Common myeloid progenitor, CD34-positive (primary cell): ENCODE measurements at regions of chr3 and their contacts with region 1.

Region 1: GRCh38 chr3:184822654-184823053 is 10.7 kb downstream of the VPS8 start:
- DNase-seq: no peak
- H3K4me3 ChIP-seq: no peak overlapping the region
- H3K27ac ChIP-seq: no peak overlapping the region
- H3K4me1 ChIP-seq: peaks cover 0 to 20% (median 1%) of the 10 kb centered on the region in 4 experiments
- H3K27me3 ChIP-seq: no peaks in the 10 kb centered on the region

Region 2: DNA sequence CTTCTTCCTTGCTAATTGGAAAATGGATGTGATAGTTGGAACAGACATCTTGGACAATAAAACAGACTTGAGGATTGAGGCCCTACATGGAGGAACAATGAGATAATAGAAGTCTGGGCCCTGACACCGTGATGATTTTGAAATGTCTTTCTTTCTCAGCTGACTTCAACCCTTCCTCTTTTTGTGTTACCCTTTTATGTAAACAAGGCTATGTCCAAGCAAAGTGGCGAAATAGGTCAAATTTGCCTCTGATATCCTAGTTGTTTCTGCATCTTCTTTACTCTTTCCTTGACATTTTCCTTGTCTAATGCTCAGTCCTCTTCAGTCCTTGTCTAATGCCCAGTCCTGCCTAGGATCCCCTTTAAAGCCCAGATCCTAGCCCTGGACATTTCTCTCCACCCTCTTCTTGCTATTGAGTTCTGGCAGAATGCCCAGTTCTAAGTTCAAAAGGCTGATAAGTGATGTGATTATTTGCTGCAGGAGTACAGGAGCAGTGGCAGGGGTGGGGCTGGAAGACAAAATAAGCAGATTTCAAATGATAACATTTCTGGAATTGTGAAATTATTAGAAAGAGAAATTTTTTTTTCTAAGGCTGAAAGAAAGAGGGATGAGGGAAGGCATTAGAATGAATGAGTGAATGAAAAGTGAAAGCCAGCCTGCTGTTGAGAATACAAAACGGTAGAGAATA is 17.2 kb before region 1 on chr3:
- CTCF ChIA-PET with region 1: interaction called, 13 read pairs
- POLR2A ChIA-PET with region 1: no interaction called
- DNase-seq: peak in 2 of 3 donors; percentile 30 to 33
- H3K4me3 ChIP-seq: no peak overlapping the region
- H3K27ac ChIP-seq: no peak overlapping the region
- H3K4me1 ChIP-seq: peaks cover 6 to 26% (median 12%) of the 10 kb centered on the region in 4 experiments
- H3K27me3 ChIP-seq: no peaks in the 10 kb centered on the region